Ovary (tissue), 10 donors: ENCODE measurements at regions of chr11 and their contacts with region 1.

Region 1: GRCh38 chr11:131449036-131450019 is 78.9 kb downstream of the NTM start:
- DNase-seq: no peak
- H3K4me3 ChIP-seq: no peak overlapping the region
- H3K27ac ChIP-seq: no peak overlapping the region
- H3K4me1 ChIP-seq: no peaks in the 10 kb centered on the region
- H3K27me3 ChIP-seq: no peaks in the 10 kb centered on the region
- CTCF ChIP-seq: no peak
- EP300 ChIP-seq: no peak
- POLR2A ChIP-seq: no peak

Region 2: GRCh38 chr11:131397675-131398074 is 51.7 kb before region 1 on chr11:
- intact Hi-C with region 1: no loop called
- DNase-seq: no peak
- H3K4me3 ChIP-seq: no peak overlapping the region
- H3K27ac ChIP-seq: no peak overlapping the region
- H3K4me1 ChIP-seq: no peaks in the 10 kb centered on the region
- H3K27me3 ChIP-seq: no peaks in the 10 kb centered on the region
- CTCF ChIP-seq: no peak
- EP300 ChIP-seq: no peak
- POLR2A ChIP-seq: no peak

Region 3: GRCh38 chr11:132347156-132348090 is 898.1 kb after region 1 on chr11:
- intact Hi-C with region 1: loop called in 1 of 4 experiments (anchors 5 kb)
- DNase-seq: no peak
- H3K4me3 ChIP-seq: no peak overlapping the region
- H3K27ac ChIP-seq: no peak overlapping the region
- H3K4me1 ChIP-seq: no peaks in the 10 kb centered on the region
- H3K27me3 ChIP-seq: no peaks in the 10 kb centered on the region
- CTCF ChIP-seq: no peak
- EP300 ChIP-seq: no peak
- POLR2A ChIP-seq: no peak